ENCODE measurements at regions of chr4 and their contacts with region 1.

Region 1: GRCh38 chr4:185183619-185184281 is 20.1 kb downstream of the CFAP97 start:
- DNase-seq: peak; percentile 78

Region 2: DNA sequence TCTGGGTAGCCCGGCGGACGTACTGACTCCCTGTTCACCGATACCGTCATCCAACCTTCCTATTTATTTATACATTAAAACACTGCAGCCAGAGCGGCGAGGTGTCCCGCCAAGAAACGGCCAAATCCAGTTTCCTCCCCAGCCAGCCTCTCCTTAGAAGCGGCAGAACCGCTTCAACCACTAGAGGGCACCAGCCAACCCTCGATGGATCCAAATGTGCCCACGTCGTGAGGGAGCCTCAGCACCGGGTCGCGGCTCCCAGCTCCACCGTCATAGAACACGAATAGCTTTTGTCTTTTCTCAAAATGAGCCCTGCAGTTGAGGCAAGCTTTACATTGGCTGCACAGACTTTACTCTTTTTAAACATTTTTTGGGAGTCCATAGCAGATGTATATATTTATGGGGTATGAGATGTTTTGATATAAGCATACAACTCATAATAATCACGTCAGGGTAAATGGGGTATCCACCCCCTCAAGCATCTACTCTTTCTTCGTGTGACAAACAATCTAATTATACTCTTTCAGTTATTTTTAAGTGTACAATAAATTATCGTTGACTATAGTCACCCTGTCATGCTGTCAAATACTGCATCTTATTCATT is 178.4 kb before region 1 on chr4:
- intact Hi-C with region 1: loop called (anchors 2 kb)
- DNase-seq: peak; percentile 88

Region 3: GRCh38 chr4:185039508-185040273 is 144.1 kb before region 1 on chr4:
- intact Hi-C with region 1: loop called (anchors 5 kb)
- DNase-seq: no peak

Region 4: GRCh38 chr4:185096032-185096653 is 87.6 kb before region 1 on chr4:
- intact Hi-C with region 1: loop called (anchors 5 kb)
- DNase-seq: no peak

Region 5: GRCh38 chr4:185142912-185143595 is 40.7 kb before region 1 on chr4 and contains the start of gene SLC25A4:
- intact Hi-C with region 1: loop called (anchors 5 kb)
- DNase-seq: peak; percentile 94
- total RNA-seq, gene SLC25A4: 1,443 TPM

Region 6: DNA sequence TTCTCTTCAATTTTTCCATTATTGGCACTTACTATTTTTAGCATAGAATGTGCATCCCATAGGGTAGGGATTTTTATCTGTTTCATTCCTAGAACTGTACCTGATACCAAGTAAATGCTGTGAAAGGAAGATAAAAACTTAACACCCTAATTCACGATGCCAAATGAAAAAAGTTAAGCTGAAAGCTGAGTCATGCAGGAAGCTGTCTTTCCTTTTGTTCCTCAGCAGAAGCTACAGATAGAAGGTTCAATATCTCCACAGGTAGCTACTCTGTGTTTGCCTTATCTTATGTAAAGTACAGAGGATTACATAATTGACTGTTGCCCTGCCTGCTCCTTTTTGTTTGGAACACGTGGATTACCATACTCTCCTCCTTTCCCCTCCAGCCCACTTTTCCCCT is 134.9 kb after region 1 on chr4:
- intact Hi-C with region 1: no loop called
- DNase-seq: no peak